CD8-positive, alpha-beta T cell (primary cell): ENCODE measurements at regions of chr7 and their contacts with region 1.

Region 1: DNA sequence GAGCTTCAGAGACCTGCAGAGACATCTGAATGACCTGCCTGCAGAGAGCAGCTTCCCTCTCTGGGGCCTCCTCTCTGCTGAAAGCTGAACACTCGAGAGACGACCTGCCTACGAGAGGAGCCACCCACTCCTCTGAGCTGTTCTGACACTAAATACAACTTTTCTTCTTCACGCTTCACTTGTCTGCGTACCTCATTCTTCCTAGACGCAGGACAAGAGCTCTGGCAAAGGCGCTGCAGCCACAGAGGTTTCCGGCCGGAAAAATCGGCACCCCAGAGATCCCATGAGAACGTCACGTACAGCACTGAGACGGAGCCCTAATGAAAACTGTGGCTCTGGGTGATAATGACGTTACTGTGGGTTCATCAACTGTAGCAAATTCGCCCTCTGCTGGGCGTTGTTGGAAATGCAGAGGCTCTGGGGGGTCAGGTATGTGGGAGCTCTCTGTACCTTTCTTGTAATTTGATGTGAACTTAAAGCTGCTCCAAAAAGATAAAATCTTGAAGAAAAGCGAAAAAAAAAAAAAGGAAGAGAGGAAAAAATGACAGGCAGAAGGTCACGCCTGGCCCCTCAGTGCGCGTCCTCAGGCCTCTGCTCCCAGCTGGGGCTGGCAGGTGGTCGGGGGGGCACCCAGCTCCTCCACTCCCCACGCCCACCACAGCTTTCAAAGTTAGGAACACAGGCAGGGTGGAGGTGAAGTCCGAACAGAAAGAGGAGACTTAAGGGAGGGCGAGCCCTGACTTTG is 120.7 kb downstream of the DYNC2I1 start:
- DNase-seq: peak; percentile 85 to 96 (median 91)
- ATAC-seq: peak; percentile 87
- H3K4me3 ChIP-seq: peak overlapping the region; percentile 42 to 57
- H3K4me3 Mint-ChIP-seq: peak overlapping the region; percentile 84
- H3K27ac ChIP-seq: peak overlapping the region; percentile 36 to 71
- H3K27ac Mint-ChIP-seq: peak overlapping the region; percentile 83
- H3K4me1 ChIP-seq: peaks cover 11% of the 10 kb centered on the region
- H3K4me1 Mint-ChIP-seq: peaks cover 20% of the 10 kb centered on the region
- H3K27me3 ChIP-seq: no peaks in the 10 kb centered on the region
- H3K27me3 Mint-ChIP-seq: no peaks in the 10 kb centered on the region
- CTCF ChIP-seq: peak; percentile 94

Region 2: DNA sequence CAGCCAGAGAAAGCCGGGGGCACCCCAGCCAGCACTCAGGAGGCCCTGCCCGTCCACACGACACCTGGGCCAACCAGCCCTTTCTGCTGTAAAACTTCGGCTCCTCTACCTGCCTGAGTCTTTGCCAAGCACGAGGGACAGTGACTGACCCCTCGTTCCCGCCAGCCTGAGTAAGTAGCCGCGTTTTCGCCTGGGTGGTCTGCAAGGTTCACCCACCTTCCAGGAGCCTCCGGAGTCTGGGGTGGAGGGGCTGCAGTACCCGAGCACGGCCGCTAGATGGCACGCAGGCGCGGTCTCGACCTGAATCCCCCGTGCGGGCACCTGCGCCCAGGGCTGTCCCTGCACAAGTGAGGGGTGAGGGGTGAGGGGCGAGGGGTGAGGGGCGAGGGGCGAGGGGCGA is 582.1 kb before region 1 on chr7:
- CTCF ChIA-PET with region 1: interaction called, 4 read pairs
- POLR2A ChIA-PET with region 1: no interaction called
- intact Hi-C with region 1: loop called in 1 of 2 experiments (anchors 5 kb)
- DNase-seq: peak in 7 of 9 experiments; percentile 11 to 56 (median 44)
- ATAC-seq: peak; percentile 46
- H3K4me3 ChIP-seq: no peak overlapping the region
- H3K4me3 Mint-ChIP-seq: no peak overlapping the region
- H3K27ac ChIP-seq: no peak overlapping the region
- H3K27ac Mint-ChIP-seq: no peak overlapping the region
- H3K4me1 ChIP-seq: no peaks in the 10 kb centered on the region
- H3K4me1 Mint-ChIP-seq: no peaks in the 10 kb centered on the region
- H3K27me3 ChIP-seq: no peaks in the 10 kb centered on the region
- H3K27me3 Mint-ChIP-seq: peaks cover 2% of the 10 kb centered on the region
- CTCF ChIP-seq: peak; percentile 48

Region 3: DNA sequence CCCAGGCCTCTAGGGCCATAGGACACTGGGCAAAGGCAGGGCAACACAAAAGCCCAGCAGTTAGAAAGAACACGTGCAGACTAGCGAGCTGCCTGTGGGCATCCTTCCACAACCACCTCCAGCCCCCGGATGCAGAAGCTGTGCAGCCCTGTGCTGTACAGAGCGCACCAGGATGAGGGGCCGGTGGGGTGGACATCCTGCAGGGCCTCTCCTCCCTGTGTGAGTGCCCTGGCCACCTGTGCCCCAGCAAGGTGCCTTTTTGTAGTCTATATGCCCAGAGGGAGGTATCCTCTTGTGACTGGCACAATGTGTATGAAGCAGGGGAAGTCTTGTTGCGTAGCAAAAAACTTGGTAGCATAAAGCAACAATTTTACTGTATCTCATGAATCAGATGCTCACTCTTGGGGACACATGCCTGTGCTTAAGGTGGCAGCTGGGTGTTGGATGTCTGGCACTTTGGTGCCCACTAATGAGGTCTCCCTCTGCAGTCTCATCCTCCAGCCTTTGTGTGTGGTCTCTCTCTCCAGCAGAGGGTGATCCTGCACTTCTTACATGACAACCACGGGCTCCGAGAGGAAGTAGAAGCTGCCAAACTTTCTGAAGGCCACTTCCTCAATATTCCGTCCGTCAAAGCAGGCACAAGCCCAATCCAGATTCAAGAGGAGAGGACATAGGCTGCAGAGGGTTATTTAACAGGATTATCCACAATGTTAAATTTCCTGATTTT is 281.1 kb before region 1 on chr7:
- CTCF ChIA-PET with region 1: interaction called, 75 read pairs
- POLR2A ChIA-PET with region 1: interaction called, 3 read pairs
- intact Hi-C with region 1: loop called in 1 of 2 experiments (anchors 1 kb)
- DNase-seq: peak in 7 of 9 experiments; percentile 31 to 84 (median 53)
- ATAC-seq: peak; percentile 77
- H3K4me3 ChIP-seq: no peak overlapping the region
- H3K4me3 Mint-ChIP-seq: no peak overlapping the region
- H3K27ac ChIP-seq: no peak overlapping the region
- H3K27ac Mint-ChIP-seq: peak overlapping the region; percentile 32
- H3K4me1 ChIP-seq: no peaks in the 10 kb centered on the region
- H3K4me1 Mint-ChIP-seq: peaks cover 5% of the 10 kb centered on the region
- H3K27me3 ChIP-seq: no peaks in the 10 kb centered on the region
- H3K27me3 Mint-ChIP-seq: no peaks in the 10 kb centered on the region
- CTCF ChIP-seq: no peak

Region 4: DNA sequence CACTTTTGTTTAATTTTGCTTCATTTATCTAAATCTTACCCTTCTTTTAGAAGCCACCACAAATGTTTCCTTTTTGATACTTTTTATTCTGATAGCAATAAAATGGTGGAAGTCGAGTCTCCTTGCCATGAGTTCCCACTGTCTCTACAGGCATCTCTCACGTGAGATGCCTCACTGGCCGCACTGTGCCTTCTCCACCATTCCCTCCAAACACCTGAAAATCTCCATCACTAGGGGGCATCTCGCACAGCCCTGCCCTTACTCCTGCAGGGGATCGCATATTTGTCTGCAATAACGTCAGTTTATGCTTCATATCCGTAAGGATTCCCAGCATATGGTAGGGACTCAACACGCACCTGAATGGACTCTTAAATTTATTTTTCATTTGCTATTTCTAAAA is 216.1 kb before region 1 on chr7:
- CTCF ChIA-PET with region 1: interaction called, 7 read pairs
- POLR2A ChIA-PET with region 1: no interaction called
- intact Hi-C with region 1: loop called (anchors 1 to 5 kb)
- DNase-seq: peak in 3 of 9 experiments; percentile 30 to 51 (median 39)
- ATAC-seq: peak; percentile 61
- H3K4me3 ChIP-seq: no peak overlapping the region
- H3K4me3 Mint-ChIP-seq: no peak overlapping the region
- H3K27ac ChIP-seq: no peak overlapping the region
- H3K27ac Mint-ChIP-seq: peak overlapping the region; percentile 60
- H3K4me1 ChIP-seq: no peaks in the 10 kb centered on the region
- H3K4me1 Mint-ChIP-seq: peaks cover 6% of the 10 kb centered on the region
- H3K27me3 ChIP-seq: no peaks in the 10 kb centered on the region
- H3K27me3 Mint-ChIP-seq: no peaks in the 10 kb centered on the region
- CTCF ChIP-seq: peak; percentile 17

Region 5: GRCh38 chr7:158829342-158830210 is 147.4 kb before region 1 on chr7 and contains the start of gene ESYT2:
- CTCF ChIA-PET with region 1: interaction called, 17 read pairs
- POLR2A ChIA-PET with region 1: interaction called, 3 read pairs
- intact Hi-C with region 1: no loop called
- DNase-seq: peak; percentile 98 to 100 (median 99)
- ATAC-seq: peak; percentile 74
- H3K4me3 ChIP-seq: peak within 1 kb of the TSS; percentile 70 to 75
- H3K4me3 Mint-ChIP-seq: peak within 1 kb of the TSS; percentile 94
- H3K27ac ChIP-seq: peak within 1 kb of the TSS; percentile 93 to 97
- H3K27ac Mint-ChIP-seq: peak within 1 kb of the TSS; percentile 95
- H3K4me1 ChIP-seq: peaks cover 32% of the 10 kb centered on the region
- H3K4me1 Mint-ChIP-seq: peaks cover 37% of the 10 kb centered on the region
- H3K27me3 ChIP-seq: no peaks in the 10 kb centered on the region
- H3K27me3 Mint-ChIP-seq: no peaks in the 10 kb centered on the region
- CTCF ChIP-seq: no peak
- total RNA-seq, gene ESYT2: 76.8 to 84.4 TPM

Region 6: DNA sequence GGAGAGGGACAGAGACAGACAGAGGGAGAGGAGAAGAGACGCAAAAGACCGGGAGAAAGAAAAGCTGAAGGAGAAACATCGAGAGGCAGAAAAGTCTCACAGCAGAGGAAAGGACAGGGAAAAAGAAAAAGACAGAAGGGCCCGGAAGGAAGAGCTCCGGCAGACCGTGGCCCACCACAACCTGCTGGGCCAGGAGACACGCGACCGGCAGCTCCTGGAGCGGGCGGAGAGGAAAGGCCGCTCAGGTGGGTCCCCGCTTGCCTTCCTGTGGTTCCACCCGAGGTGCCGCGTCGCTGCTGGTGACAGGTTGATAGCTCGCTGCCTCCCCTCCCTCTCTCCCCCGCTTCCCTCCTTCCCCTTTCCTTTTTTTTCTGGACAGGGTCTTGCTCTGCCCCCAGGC is 105.7 kb before region 1 on chr7:
- CTCF ChIA-PET with region 1: interaction called, 10 read pairs
- POLR2A ChIA-PET with region 1: no interaction called
- intact Hi-C with region 1: no loop called
- DNase-seq: no peak
- ATAC-seq: no peak
- H3K4me3 ChIP-seq: no peak overlapping the region
- H3K4me3 Mint-ChIP-seq: no peak overlapping the region
- H3K27ac ChIP-seq: no peak overlapping the region
- H3K27ac Mint-ChIP-seq: no peak overlapping the region
- H3K4me1 ChIP-seq: no peaks in the 10 kb centered on the region
- H3K4me1 Mint-ChIP-seq: peaks cover 10% of the 10 kb centered on the region
- H3K27me3 ChIP-seq: no peaks in the 10 kb centered on the region
- H3K27me3 Mint-ChIP-seq: no peaks in the 10 kb centered on the region
- CTCF ChIP-seq: no peak

Region 7: GRCh38 chr7:158963771-158964241 is 13.2 kb before region 1 on chr7:
- CTCF ChIA-PET with region 1: interaction called, 24 read pairs
- POLR2A ChIA-PET with region 1: no interaction called
- intact Hi-C with region 1: no loop called
- DNase-seq: no peak
- ATAC-seq: no peak
- H3K4me3 ChIP-seq: no peak overlapping the region
- H3K4me3 Mint-ChIP-seq: no peak overlapping the region
- H3K27ac ChIP-seq: no peak overlapping the region
- H3K27ac Mint-ChIP-seq: no peak overlapping the region
- H3K4me1 ChIP-seq: no peaks in the 10 kb centered on the region
- H3K4me1 Mint-ChIP-seq: no peaks in the 10 kb centered on the region
- H3K27me3 ChIP-seq: no peaks in the 10 kb centered on the region
- H3K27me3 Mint-ChIP-seq: peaks cover 14% of the 10 kb centered on the region
- CTCF ChIP-seq: no peak

Region 8: DNA sequence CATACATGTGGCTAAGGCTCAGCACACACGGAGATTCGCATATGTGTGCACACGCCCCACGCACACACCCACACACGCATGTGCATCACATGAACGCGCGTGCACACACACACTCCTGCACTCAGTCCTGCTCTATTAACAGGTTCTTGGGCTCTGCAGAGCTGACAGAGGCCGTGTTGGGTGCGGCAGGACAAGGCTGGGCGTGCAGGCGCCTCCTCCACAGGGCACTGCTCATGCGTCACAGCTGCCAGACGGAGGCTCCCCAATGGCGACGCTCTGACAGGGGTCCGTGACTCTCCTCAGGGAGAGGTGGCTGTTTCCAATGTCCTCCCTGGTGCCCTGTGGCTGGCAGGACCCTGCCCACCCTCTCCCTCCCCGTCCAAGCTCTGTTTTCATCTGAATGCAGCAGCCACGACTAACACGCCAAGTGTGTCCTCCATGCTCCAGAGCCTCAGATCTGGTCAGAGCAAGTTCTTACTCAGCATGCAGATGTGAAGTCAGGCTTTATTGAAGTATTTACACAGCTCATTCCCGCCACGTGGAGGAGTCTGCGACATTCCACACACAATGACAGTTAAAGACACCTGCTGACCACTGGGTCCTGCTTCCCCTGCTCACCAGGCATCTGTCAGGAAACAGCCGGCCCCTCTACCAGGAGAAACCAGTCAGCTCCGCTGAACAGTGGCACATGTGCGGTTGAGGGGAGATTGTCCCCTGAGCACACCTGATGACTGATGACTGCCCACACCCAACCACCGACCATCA is 50.9 kb after region 1 on chr7:
- CTCF ChIA-PET with region 1: no interaction called
- POLR2A ChIA-PET with region 1: no interaction called
- intact Hi-C with region 1: no loop called
- DNase-seq: peak in 2 of 9 experiments; percentile 6 to 19
- ATAC-seq: no peak
- H3K4me3 ChIP-seq: no peak overlapping the region
- H3K4me3 Mint-ChIP-seq: no peak overlapping the region
- H3K27ac ChIP-seq: no peak overlapping the region
- H3K27ac Mint-ChIP-seq: no peak overlapping the region
- H3K4me1 ChIP-seq: no peaks in the 10 kb centered on the region
- H3K4me1 Mint-ChIP-seq: peaks cover 6% of the 10 kb centered on the region
- H3K27me3 ChIP-seq: peaks cover 0 to 9% of the 10 kb centered on the region in 2 experiments
- H3K27me3 Mint-ChIP-seq: peaks cover 43% of the 10 kb centered on the region
- CTCF ChIP-seq: no peak

Region 9: GRCh38 chr7:159306012-159306411 is 329.0 kb after region 1 on chr7:
- CTCF ChIA-PET with region 1: no interaction called
- POLR2A ChIA-PET with region 1: no interaction called
- intact Hi-C with region 1: no loop called
- DNase-seq: no peak
- ATAC-seq: no peak
- H3K4me3 ChIP-seq: no peak overlapping the region
- H3K4me3 Mint-ChIP-seq: no peak overlapping the region
- H3K27ac ChIP-seq: no peak overlapping the region
- H3K27ac Mint-ChIP-seq: no peak overlapping the region
- H3K4me1 ChIP-seq: no peaks in the 10 kb centered on the region
- H3K4me1 Mint-ChIP-seq: no peaks in the 10 kb centered on the region
- H3K27me3 ChIP-seq: no peaks in the 10 kb centered on the region
- H3K27me3 Mint-ChIP-seq: peaks cover 7% of the 10 kb centered on the region
- CTCF ChIP-seq: no peak